GM23248 (cell line): ENCODE measurements at regions of chr15 and their contacts with region 1.

Region 1: DNA sequence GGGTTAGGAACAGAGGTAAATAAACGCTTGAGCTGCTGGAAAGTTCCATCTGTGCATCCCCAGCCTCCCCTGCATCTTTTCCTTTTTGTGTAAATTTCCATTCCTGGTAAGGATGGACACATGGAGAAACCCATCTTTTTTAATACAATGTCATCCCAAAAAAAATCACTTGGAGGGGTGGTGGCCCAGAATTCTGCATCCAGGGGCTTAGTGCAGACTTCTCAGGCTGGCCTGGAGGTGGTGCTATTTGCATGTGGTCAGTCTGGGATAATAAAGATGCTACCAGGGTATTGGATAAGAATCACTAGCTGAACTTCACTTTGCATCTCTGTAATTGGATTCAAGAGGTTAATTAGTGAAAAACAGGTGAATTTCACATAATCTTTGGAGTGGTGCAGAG is 1.8 kb upstream of the ZSCAN2 start:
- DNase-seq: peak; percentile 75
- H3K4me3 ChIP-seq: no peak overlapping the region
- H3K27ac ChIP-seq: no peak overlapping the region
- H3K4me1 ChIP-seq: 0 out of 2 replicates have a peak, but pooled peaks cover 6% of the 10 kb centered on the region
- H3K27me3 ChIP-seq: no peaks in the 10 kb centered on the region

Region 2: DNA sequence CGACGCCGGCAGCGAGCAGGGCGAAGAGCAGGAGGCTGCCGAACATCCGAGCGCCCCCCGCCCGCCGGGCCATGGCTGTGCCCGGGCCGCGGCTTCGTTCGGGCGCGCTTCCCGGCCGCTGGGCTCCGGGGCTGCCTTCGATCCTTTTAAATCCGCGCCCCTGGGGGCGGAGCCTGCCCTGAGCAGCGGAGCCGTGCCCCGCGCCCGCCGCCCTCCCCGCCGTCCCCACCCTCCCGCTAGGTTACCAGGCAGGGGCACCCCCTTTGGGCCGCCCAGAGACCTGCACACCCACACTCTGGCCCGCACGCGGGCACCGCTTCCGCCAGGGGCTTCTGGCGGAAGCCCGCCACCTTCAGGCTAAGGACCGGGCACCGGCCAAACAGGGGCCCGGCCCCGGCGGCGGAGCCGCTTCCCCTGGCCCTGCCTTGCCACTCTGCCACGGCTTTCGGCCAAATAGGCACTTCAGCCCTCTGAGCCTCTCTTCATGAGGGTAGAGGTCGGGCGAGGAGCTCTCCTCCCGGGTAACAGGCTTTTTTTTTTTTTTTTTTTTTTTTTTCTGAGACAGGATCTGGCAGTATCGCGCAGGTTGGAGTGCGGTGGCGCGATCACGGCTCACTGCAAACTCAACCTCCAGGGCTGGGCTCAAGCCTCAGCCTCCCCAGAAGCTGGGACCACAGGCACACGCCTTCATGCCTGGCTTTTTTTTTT is 59.3 kb after region 1 on chr15 and contains the start of gene NMB:
- in situ Hi-C with region 1: no loop called
- DNase-seq: peak; percentile 89
- H3K4me3 ChIP-seq: peak within 1 kb of the TSS; percentile 67
- H3K27ac ChIP-seq: peak within 1 kb of the TSS; percentile 42
- H3K4me1 ChIP-seq: peaks cover 8% of the 10 kb centered on the region
- H3K27me3 ChIP-seq: no peaks in the 10 kb centered on the region
- total RNA-seq, gene NMB: 7.7 and 14.0 TPM in 2 replicates

Region 3: DNA sequence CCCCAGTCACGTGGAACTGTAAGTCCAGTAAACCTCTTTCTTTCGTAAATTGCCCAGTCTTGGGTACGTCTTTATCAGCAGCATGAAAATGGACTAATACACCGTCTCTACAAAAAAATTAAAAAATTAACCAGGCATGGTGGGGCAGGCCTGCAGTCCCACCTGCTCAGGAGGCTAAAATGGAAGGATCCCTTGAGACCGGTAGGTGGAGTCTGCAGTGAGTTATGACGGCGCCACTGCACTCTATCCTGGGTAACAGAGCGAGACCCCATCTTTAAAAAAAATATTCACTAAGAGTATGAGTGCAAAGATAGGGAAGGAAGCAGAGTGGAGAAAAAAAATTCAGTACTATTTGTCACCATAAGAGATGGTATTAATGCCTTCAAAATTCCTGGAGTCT is 91.4 kb after region 1 on chr15:
- in situ Hi-C with region 1: no loop called
- DNase-seq: no peak
- H3K4me3 ChIP-seq: no peak overlapping the region
- H3K27ac ChIP-seq: no peak overlapping the region
- H3K4me1 ChIP-seq: peaks cover 9% of the 10 kb centered on the region
- H3K27me3 ChIP-seq: no peaks in the 10 kb centered on the region

Region 4: GRCh38 chr15:84702961-84703482 is 104.1 kb after region 1 on chr15:
- in situ Hi-C with region 1: no loop called
- DNase-seq: peak; percentile 44
- H3K4me3 ChIP-seq: no peak overlapping the region
- H3K27ac ChIP-seq: no peak overlapping the region
- H3K4me1 ChIP-seq: peaks cover 9% of the 10 kb centered on the region
- H3K27me3 ChIP-seq: no peaks in the 10 kb centered on the region

Region 5: DNA sequence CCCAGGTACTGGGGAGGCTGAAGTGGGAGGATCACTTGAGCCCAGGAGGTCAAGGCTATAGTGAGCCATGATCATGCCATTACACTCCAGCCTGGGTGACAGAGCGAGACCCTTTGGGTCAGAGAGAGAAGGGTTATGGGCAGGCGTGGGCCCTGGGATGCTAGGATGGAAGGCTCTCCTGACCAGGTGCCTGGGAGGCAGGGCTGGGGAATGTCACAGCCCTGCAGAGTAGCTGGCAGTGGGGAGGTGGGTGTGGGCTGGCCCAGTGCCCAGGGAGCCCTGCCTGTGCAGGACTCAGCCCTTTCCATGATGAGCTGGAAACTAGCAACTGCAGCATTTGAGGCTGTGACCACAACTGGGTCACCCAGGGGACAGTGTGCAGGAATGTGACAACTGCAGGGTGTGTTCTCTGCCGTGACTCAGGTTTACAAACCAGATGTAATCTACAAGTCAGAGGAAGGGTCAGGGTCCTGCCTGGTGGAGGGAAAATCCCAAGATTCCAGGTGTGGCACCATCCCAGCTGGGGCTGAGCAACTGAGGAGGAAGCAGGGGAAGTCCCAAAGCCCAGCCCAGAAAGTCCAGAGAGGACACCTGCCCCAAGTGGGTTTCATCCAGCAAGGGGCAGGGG is 330.9 kb after region 1 on chr15:
- in situ Hi-C with region 1: loop called (anchors 10 kb)
- DNase-seq: peak; percentile 69
- H3K4me3 ChIP-seq: no peak overlapping the region
- H3K27ac ChIP-seq: no peak overlapping the region
- H3K4me1 ChIP-seq: peaks cover 21% of the 10 kb centered on the region
- H3K27me3 ChIP-seq: no peaks in the 10 kb centered on the region

Region 6: DNA sequence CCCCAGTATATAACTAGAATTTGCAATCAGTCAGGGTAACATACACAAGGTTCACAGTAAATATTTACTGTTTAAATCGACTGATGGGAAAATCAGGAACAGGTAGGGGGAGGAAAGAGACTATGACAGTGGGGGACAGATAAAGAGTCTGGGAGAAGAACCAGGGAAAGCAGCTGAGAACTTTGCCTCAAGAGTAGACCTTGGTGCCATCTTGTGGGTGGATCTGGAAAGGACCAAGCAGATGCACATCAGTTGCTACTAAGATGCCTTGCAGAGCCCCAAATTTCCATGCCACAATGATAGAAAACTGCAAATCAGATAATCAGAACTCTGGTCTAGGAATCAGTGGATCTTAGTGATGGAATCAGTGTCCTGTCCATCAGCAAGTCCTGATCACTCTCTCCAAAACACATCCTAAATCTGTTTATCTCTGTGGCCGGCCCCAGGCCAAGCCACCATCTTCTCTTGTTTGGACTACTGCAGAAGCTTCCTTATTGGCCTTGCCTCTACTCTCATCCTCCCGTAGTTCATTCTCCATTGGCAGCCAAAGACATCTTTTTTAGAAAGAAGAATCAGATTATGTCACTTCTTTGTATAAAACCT is 445.4 kb after region 1 on chr15:
- in situ Hi-C with region 1: loop called (anchors 10 kb)
- DNase-seq: peak; percentile 83
- H3K4me3 ChIP-seq: no peak overlapping the region
- H3K27ac ChIP-seq: no peak overlapping the region
- H3K4me1 ChIP-seq: peaks cover 27% of the 10 kb centered on the region
- H3K27me3 ChIP-seq: no peaks in the 10 kb centered on the region